H1 (cell line): ENCODE measurements at regions of chr10 and their contacts with region 1.

Region 1: DNA sequence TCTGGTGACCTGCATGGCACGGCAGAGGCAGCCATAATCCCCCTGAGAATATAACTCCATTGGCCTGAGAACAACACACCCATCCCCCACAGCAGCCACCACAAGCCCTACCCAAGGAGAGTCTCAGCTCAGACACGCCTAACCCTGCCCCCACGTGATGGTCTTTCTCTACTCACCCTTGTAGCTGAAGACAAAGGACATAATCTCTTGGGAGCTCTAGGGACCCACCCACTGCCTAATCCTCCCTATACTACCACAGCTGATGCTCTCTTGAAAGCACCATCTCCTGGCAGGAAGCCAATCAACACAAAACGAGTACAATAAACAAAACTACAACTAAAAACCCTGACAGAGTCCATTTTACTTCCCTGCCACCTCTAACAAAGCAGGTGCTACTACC is 30.7 kb upstream of the HPSE2 start:
- DNase-seq: no peak
- H3K4me3 ChIP-seq: no peak overlapping the region
- H3K27ac ChIP-seq: no peak overlapping the region
- H3K4me1 ChIP-seq: peaks cover 0 to 3% (median 0%) of the 10 kb centered on the region in 4 experiments; a peak in 1 of 7 replicates
- H3K27me3 ChIP-seq: no peaks in the 10 kb centered on the region
- CTCF ChIP-seq: no peak
- EP300 ChIP-seq: no peak
- POLR2A ChIP-seq: no peak
- RAD21 ChIP-seq: no peak

Region 2: GRCh38 chr10:99161165-99161564 is 105.2 kb before region 1 on chr10:
- CTCF ChIA-PET with region 1: no interaction called
- POLR2A ChIA-PET with region 1: no interaction called
- DNase-seq: no peak
- H3K4me3 ChIP-seq: no peak overlapping the region
- H3K27ac ChIP-seq: no peak overlapping the region
- H3K4me1 ChIP-seq: no peaks in the 10 kb centered on the region
- H3K27me3 ChIP-seq: no peaks in the 10 kb centered on the region; a peak in 1 of 7 replicates
- CTCF ChIP-seq: no peak
- EP300 ChIP-seq: no peak
- POLR2A ChIP-seq: no peak
- RAD21 ChIP-seq: no peak

Region 3: GRCh38 chr10:99234041-99234790 is 32.2 kb before region 1 on chr10:
- CTCF ChIA-PET with region 1: no interaction called
- POLR2A ChIA-PET with region 1: no interaction called
- DNase-seq: peak in 1 of 2 experiments; percentile 72
- H3K4me3 ChIP-seq: peak overlapping the region; percentile 36 to 65 (median 46); a peak in 7 of 8 replicates
- H3K27ac ChIP-seq: no peak overlapping the region
- H3K4me1 ChIP-seq: peaks cover 8 to 35% (median 15%) of the 10 kb centered on the region in 4 experiments; a peak in 6 of 7 replicates
- H3K27me3 ChIP-seq: peaks cover 40 to 91% (median 73%) of the 10 kb centered on the region in 4 experiments
- CTCF ChIP-seq: no peak
- EP300 ChIP-seq: no peak
- POLR2A ChIP-seq: no peak
- RAD21 ChIP-seq: no peak

Region 4: DNA sequence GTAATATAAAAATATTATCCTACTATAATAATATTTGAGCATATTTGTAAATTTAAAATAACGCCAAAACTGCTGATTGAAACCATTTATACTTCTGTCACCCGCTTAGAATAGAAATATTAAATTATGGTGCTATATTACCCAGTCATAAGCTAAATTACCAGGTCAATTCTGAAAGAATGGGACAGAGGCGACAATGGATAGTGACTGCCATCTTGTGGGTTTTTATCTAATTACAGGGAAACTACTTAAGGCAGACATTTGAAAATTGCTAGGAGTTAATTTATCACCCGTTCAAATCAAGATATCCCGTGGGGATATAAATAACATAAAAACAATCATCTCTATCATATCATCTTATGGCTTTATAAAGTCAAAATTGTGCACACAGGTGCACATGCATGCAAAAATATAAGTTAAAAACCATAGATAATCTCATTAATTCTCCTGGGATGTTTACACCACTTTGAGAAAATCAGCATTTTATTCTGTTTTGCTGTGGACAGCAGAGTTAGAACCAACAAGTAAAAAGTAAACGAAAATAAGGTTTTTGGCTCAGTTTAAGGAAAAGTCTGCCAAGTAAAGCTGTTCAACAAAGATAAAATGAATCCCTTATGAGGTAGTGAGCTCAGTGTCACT is 10.6 kb after region 1 on chr10:
- CTCF ChIA-PET with region 1: interaction called, 16 read pairs
- POLR2A ChIA-PET with region 1: no interaction called
- DNase-seq: no peak
- H3K4me3 ChIP-seq: no peak overlapping the region
- H3K27ac ChIP-seq: no peak overlapping the region
- H3K4me1 ChIP-seq: no peaks in the 10 kb centered on the region
- H3K27me3 ChIP-seq: peaks cover 0 to 1% (median 0%) of the 10 kb centered on the region in 4 experiments; a peak in 1 of 7 replicates
- CTCF ChIP-seq: peak in 2 of 3 experiments; percentile 45 to 46; a peak in 2 of 4 replicates
- EP300 ChIP-seq: no peak
- POLR2A ChIP-seq: no peak
- RAD21 ChIP-seq: peak; percentile 86 to 88

Region 5: DNA sequence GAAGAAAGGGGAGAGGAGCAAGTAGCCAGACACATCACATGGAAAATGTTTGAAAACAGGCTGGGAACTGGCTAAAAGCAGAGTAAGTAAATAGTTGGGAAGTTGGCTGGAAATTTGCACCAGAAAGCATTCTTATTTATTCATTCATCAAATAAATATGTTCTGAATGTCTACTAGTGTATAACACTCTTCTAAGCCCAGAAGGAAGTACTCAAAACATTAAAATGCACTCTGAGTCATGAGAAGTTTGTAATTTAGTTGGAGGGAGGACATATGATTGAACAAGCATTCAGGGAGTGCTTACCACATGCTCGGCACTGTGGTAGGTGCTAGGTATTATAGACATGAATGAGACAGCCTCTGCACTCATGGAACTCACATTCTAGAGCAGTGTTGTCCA is 25.8 kb after region 1 on chr10:
- CTCF ChIA-PET with region 1: no interaction called
- POLR2A ChIA-PET with region 1: no interaction called
- DNase-seq: no peak
- H3K4me3 ChIP-seq: no peak overlapping the region
- H3K27ac ChIP-seq: no peak overlapping the region
- H3K4me1 ChIP-seq: no peaks in the 10 kb centered on the region
- H3K27me3 ChIP-seq: no peaks in the 10 kb centered on the region
- CTCF ChIP-seq: no peak
- EP300 ChIP-seq: no peak
- POLR2A ChIP-seq: no peak
- RAD21 ChIP-seq: no peak

Region 6: GRCh38 chr10:99328579-99329523 is 62.5 kb after region 1 on chr10 and contains the start of gene CNNM1:
- CTCF ChIA-PET with region 1: no interaction called
- POLR2A ChIA-PET with region 1: no interaction called
- DNase-seq: peak in 1 of 2 experiments; percentile 74
- H3K4me3 ChIP-seq: peak within 1 kb of the TSS; percentile 26 to 68 (median 54)
- H3K27ac ChIP-seq: no peak within 1 kb of the TSS
- H3K4me1 ChIP-seq: peaks cover 0 to 13% (median 4%) of the 10 kb centered on the region in 4 experiments; a peak in 6 of 7 replicates
- H3K27me3 ChIP-seq: peaks cover 22 to 38% (median 34%) of the 10 kb centered on the region in 4 experiments
- CTCF ChIP-seq: no peak
- EP300 ChIP-seq: no peak
- POLR2A ChIP-seq: no peak
- RAD21 ChIP-seq: no peak
- total RNA-seq, gene CNNM1: 0.57 and 0.74 TPM in 2 replicates